ENCODE measurements at regions of chr5 and their contacts with region 1.

Region 1: DNA sequence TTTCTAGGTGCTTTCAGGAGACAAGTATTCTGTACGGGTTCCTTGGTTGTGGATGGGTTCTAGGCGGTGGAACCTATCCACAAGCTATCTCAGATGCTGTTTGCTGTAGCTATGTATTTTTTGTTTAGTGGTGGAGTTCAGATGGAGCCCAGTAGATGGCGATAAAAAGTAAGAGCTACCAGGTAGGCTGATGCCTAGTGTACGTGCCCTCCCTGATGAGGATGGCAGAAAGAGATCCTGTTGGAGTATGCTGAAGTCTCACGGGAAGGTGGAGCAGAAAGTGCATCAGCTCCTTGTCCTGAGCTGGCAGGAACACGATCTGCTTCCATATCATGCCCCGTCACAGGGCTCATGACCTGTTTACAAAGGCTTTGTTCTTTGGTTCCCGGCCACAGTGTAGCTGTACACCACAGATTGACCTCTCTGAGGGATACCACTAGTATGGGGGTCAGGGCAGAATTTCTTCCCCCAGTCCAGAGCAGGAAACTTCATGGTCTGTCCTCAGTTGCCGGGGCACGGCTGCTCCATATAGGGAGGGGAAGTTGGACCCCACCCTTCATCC is 12.6 kb upstream of the UGT3A2 start:
- DNase-seq: peak; percentile 58 to 65 (median 62)
- ATAC-seq: peak; percentile 96
- H3K4me3 ChIP-seq: no peak overlapping the region
- H3K27ac ChIP-seq: no peak overlapping the region
- H3K4me1 ChIP-seq: no peaks in the 10 kb centered on the region
- H3K27me3 ChIP-seq: peaks cover 3 to 6% of the 10 kb centered on the region in 2 experiments; a peak in 1 of 5 replicates
- CTCF ChIP-seq: peak; percentile 65 to 83 (median 78)
- EP300 ChIP-seq: no peak
- POLR2A ChIP-seq: no peak
- RAD21 ChIP-seq: peak; percentile 50 to 73

Region 2: DNA sequence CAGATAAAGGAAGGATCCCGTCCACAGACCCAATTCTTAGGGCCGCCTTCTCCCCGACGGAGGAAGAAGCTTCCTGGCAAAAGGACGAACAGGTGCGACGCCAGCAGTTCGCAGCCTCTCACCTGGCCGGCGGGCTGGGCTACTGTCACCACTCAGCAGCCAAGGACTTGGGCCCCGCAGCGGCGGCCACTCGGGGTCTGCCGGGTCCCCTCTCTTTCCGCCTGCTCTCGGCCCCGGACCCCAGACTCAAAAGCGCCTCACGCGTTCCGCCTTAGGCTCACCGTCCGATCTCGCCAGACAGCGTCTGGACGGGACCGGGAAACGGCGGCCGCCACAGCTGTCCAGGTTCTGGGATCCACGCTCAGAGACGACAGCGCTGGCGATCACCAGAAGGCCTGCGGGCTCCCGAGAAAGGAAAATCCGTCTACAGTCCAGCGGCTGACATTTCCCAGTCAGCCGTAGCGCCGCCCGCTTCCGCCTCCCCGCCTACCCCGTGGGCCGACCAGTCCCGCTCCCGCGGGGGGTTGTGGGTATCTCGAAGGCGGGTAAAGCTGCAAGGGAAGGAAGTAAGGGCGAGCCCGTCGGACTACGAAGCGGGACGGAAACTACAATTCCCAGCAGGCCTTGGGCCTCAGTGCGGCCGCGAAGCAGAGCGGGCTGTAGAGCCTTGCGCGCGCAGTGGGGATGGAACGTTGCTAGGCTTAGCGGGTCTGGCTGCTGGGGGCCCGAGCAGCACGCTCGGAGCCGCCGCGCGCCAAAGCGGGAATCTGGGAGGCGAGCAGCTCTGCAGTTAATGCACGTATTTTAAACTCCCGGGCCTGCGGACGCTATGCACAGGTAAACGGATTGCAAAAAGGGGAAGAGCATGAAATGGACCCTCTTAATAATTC is 72.4 kb after region 1 on chr5 and contains the starts of genes LMBRD2 and SKP2:
- CTCF ChIA-PET with region 1: no interaction called
- POLR2A ChIA-PET with region 1: interaction called, 5 read pairs
- in situ Hi-C with region 1: no loop called
- intact Hi-C with region 1: loop called (anchors 1 kb)
- DNase-seq: peak; percentile 93 to 99 (median 95)
- ATAC-seq: peak; percentile 96
- H3K4me3 ChIP-seq: peak within 1 kb of the TSS; percentile 66
- H3K27ac ChIP-seq: peak within 1 kb of the TSS; percentile 80
- H3K4me1 ChIP-seq: peaks cover 6 to 16% of the 10 kb centered on the region in 2 experiments
- H3K27me3 ChIP-seq: no peaks in the 10 kb centered on the region
- CTCF ChIP-seq: no peak; a peak in 1 of 6 replicates
- EP300 ChIP-seq: peak; percentile 44; the same call in 1 of the 2 replicates
- POLR2A ChIP-seq: peak; percentile 82
- RAD21 ChIP-seq: no peak
- polyA plus RNA-seq, gene LMBRD2: 2.1 to 3.3 TPM
- polyA plus RNA-seq, gene SKP2: 30.0 to 48.3 TPM

Region 3: GRCh38 chr5:36177715-36178523 is 98.6 kb after region 1 on chr5:
- CTCF ChIA-PET with region 1: no interaction called
- POLR2A ChIA-PET with region 1: no interaction called
- in situ Hi-C with region 1: no loop called
- intact Hi-C with region 1: loop called (anchors 1 kb)
- DNase-seq: peak in 2 of 4 experiments; percentile 17 to 37
- ATAC-seq: peak; percentile 81
- H3K4me3 ChIP-seq: no peak overlapping the region
- H3K27ac ChIP-seq: no peak overlapping the region
- H3K4me1 ChIP-seq: no peaks in the 10 kb centered on the region
- H3K27me3 ChIP-seq: no peaks in the 10 kb centered on the region
- CTCF ChIP-seq: peak; percentile 36 to 65 (median 52); a peak in 5 of 6 replicates
- EP300 ChIP-seq: no peak
- POLR2A ChIP-seq: no peak
- RAD21 ChIP-seq: peak; percentile 43 to 70

Region 4: GRCh38 chr5:36241631-36242533 is 162.6 kb after region 1 on chr5 and contains the start of gene NADK2:
- CTCF ChIA-PET with region 1: interaction called, 3 read pairs
- POLR2A ChIA-PET with region 1: no interaction called
- in situ Hi-C with region 1: no loop called
- intact Hi-C with region 1: loop called (anchors 2 kb)
- DNase-seq: peak; percentile 97 to 99 (median 98)
- ATAC-seq: peak; percentile 89
- H3K4me3 ChIP-seq: peak within 1 kb of the TSS; percentile 83
- H3K27ac ChIP-seq: peak within 1 kb of the TSS; percentile 99
- H3K4me1 ChIP-seq: peaks cover 20 to 39% of the 10 kb centered on the region in 2 experiments
- H3K27me3 ChIP-seq: no peaks in the 10 kb centered on the region
- CTCF ChIP-seq: peak; percentile 80 to 90 (median 87)
- EP300 ChIP-seq: peak; percentile 62
- POLR2A ChIP-seq: peak; percentile 82
- RAD21 ChIP-seq: peak; percentile 53 to 65
- polyA plus RNA-seq, gene NADK2: 10.6 to 11.0 TPM

Region 5: GRCh38 chr5:36305571-36306326 is 226.5 kb after region 1 on chr5:
- CTCF ChIA-PET with region 1: interaction called, 11 read pairs
- POLR2A ChIA-PET with region 1: no interaction called
- in situ Hi-C with region 1: loop called (anchors 5 kb)
- intact Hi-C with region 1: loop called (anchors 1 kb)
- DNase-seq: peak in 2 of 4 experiments; percentile 34 to 57
- ATAC-seq: peak; percentile 92
- H3K4me3 ChIP-seq: no peak overlapping the region
- H3K27ac ChIP-seq: no peak overlapping the region
- H3K4me1 ChIP-seq: no peaks in the 10 kb centered on the region
- H3K27me3 ChIP-seq: 0 out of 5 replicates have a peak, but pooled peaks cover 2 to 4% of the 10 kb centered on the region in 2 experiments
- CTCF ChIP-seq: peak; percentile 80 to 89 (median 86)
- EP300 ChIP-seq: no peak
- POLR2A ChIP-seq: no peak
- RAD21 ChIP-seq: peak; percentile 89 to 92

Region 6: DNA sequence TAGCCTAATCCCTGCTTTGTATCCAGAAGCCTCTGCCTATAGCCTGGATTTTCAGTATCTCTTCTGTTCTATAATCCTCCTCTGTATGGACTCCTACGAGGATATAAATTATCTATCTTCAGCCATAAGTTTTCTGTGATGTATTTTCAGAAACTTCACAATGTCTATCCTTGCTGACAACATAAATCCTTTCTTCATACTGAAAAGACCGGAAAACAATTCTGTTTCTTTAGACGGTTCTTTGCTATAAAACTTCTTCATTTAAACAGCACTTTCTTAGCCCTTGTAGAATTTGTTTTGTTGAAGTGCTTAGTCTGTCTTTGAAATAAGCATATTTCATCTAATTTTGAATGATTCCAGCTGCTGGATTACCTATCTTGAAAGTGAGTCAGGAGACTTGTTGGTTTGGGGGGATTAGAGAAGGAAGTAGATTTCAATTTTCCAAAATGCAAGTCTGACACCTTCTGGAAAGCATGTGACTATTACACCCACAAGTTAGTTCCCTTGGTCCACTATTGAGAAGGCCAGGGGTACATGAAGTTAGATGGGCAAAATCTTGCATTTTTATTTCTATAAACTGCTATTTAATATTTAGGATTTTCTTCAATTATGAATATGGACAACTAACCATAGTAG is 318.7 kb after region 1 on chr5:
- CTCF ChIA-PET with region 1: interaction called, 3 read pairs
- POLR2A ChIA-PET with region 1: no interaction called
- in situ Hi-C with region 1: no loop called
- intact Hi-C with region 1: loop called (anchors 5 kb)
- DNase-seq: peak in 1 of 4 experiments; percentile 43
- ATAC-seq: peak; percentile 79
- H3K4me3 ChIP-seq: no peak overlapping the region
- H3K27ac ChIP-seq: no peak overlapping the region
- H3K4me1 ChIP-seq: no peaks in the 10 kb centered on the region
- H3K27me3 ChIP-seq: 0 out of 5 replicates have a peak, but pooled peaks cover 0 to 5% of the 10 kb centered on the region in 2 experiments
- CTCF ChIP-seq: peak; percentile 41 to 65 (median 48); a peak in 4 of 6 replicates
- EP300 ChIP-seq: no peak
- POLR2A ChIP-seq: no peak
- RAD21 ChIP-seq: peak; percentile 55 to 77

Region 7: DNA sequence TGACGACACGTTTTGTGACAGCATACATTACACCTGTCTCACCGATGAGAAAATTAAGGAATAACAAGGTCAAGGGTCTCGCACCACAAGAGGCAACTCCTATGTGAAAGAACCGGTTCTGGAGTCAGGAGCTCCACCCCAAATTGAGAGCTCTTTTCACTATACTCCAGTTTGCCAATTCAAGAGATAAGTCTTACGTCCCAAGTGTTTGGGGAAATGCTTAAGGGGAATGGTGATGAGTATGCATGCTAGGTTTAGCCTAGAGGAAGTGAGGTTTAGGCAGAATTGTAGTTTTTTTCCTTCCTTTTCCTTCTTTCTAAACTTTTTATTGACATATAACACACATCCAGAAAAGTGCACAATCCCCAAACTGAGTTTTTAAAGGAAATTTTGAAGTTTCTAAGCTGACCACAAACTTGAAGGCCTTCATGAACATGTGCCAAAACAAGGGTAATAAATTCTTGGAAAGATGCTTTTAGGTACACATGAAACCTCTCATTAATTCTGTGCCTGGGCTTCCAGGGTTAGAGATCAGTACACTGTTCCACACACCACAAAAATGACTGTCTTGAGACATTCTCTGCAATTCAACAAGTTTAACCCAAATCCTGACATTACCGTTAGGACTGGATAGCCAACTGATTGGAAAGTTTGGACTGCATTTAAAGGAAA is 399.5 kb after region 1 on chr5:
- CTCF ChIA-PET with region 1: no interaction called
- POLR2A ChIA-PET with region 1: no interaction called
- in situ Hi-C with region 1: no loop called
- intact Hi-C with region 1: no loop called
- DNase-seq: no peak
- ATAC-seq: no peak
- H3K4me3 ChIP-seq: no peak overlapping the region
- H3K27ac ChIP-seq: no peak overlapping the region
- H3K4me1 ChIP-seq: no peaks in the 10 kb centered on the region
- H3K27me3 ChIP-seq: no peaks in the 10 kb centered on the region
- CTCF ChIP-seq: no peak
- EP300 ChIP-seq: no peak
- POLR2A ChIP-seq: no peak
- RAD21 ChIP-seq: no peak

Region 8: DNA sequence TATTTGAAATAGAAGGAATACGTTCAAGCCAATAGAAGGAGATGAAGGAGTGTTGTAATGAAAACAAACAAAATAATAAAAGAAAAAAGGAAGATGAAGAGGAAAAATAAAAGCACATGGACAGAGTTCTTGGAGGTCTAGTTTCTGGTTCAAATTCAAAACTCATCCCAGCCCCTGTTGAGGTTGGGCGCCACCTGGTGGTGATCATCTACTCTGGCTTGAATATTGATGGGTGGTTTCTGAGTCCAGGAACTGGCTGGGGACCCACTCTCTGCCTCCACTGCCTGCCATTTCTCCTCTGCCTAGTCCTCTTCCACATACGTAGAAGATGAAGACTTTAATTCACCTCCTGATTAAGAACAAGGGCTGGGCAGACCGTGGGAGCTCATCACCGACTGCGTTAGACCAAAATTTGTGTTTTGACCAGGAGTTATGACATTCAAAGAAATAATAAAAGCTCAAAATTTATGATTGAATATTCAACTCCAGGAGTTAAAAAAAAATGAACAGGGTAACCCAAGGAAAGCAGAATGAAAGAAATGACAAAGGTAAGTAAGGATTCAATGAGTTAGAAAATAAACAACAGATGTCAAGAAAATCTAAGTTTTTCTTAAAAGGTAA is 428.2 kb after region 1 on chr5:
- CTCF ChIA-PET with region 1: no interaction called
- POLR2A ChIA-PET with region 1: no interaction called
- in situ Hi-C with region 1: no loop called
- intact Hi-C with region 1: loop called (anchors 10 kb)
- DNase-seq: peak; percentile 84 to 87 (median 86)
- ATAC-seq: peak; percentile 95
- H3K4me3 ChIP-seq: no peak overlapping the region
- H3K27ac ChIP-seq: no peak overlapping the region
- H3K4me1 ChIP-seq: no peaks in the 10 kb centered on the region
- H3K27me3 ChIP-seq: peaks cover 0 to 4% of the 10 kb centered on the region in 2 experiments; a peak in 1 of 5 replicates
- CTCF ChIP-seq: peak; percentile 83 to 88 (median 86)
- EP300 ChIP-seq: no peak
- POLR2A ChIP-seq: no peak
- RAD21 ChIP-seq: peak; percentile 81 to 92

Region 9: GRCh38 chr5:36535378-36535777 is 456.1 kb after region 1 on chr5:
- CTCF ChIA-PET with region 1: no interaction called
- POLR2A ChIA-PET with region 1: no interaction called
- in situ Hi-C with region 1: no loop called
- intact Hi-C with region 1: no loop called
- DNase-seq: no peak
- ATAC-seq: no peak
- H3K4me3 ChIP-seq: no peak overlapping the region
- H3K27ac ChIP-seq: no peak overlapping the region
- H3K4me1 ChIP-seq: no peaks in the 10 kb centered on the region
- H3K27me3 ChIP-seq: peaks cover 3 to 26% of the 10 kb centered on the region in 2 experiments; a peak in 4 of 5 replicates
- CTCF ChIP-seq: no peak
- EP300 ChIP-seq: no peak
- POLR2A ChIP-seq: no peak
- RAD21 ChIP-seq: no peak

Measured in K562 (cell line).